ENCODE measurements at regions of chr21 and their contacts with region 1.

Region 1: DNA sequence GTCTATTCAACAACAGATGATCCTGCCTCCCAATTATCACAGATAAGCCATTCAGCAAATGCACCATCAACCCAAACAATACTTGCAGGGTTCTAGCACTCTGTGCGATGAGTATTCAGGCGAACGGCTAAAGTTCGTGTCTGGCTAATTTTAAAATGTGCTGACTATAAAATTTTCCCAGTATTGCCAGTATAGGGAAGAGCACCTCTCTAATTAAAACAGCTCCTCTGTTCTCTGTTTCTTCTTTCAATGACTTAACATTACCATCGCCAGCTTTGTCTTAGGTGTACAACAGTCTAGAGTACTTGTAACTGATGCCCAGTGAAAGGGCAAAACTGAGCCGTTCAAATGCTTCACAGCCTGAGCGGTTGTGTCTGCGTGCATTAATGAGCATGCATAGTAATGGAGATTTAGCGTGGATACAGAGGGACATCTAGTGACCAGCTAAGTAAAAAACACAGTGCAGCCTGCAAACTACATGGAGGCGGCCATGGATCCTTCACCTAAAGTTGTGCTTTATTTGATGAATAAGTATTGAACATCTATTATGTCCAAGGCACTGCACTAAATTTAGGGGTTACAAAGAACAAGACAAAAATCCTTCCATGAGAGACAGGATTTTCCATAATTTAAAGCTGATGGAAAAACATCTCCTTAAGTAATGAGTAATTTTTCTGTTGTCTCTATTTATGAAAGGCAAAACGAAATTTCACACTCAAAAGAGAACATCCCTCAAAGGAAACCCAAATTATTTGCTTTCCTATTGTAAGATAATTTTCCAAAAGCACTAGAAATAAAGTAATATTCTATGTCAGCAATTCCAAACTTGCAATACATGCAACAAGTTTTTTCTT is 120.0 kb downstream of the SETD4 start:
- DNase-seq: peak; percentile 57
- ATAC-seq: peak; percentile 66
- H3K4me3 ChIP-seq: no peak overlapping the region
- H3K4me3 Mint-ChIP-seq: no peak overlapping the region
- H3K27ac ChIP-seq: no peak overlapping the region
- H3K27ac Mint-ChIP-seq: no peak overlapping the region
- H3K4me1 ChIP-seq: peaks cover 9 to 12% of the 10 kb centered on the region in 2 donors
- H3K4me1 Mint-ChIP-seq: peaks cover 5% of the 10 kb centered on the region
- H3K27me3 ChIP-seq: peaks cover 0 to 5% (median 0%) of the 10 kb centered on the region in 4 experiments
- H3K27me3 Mint-ChIP-seq: peaks cover 5% of the 10 kb centered on the region
- CTCF ChIP-seq: peak; percentile 16

Region 2: DNA sequence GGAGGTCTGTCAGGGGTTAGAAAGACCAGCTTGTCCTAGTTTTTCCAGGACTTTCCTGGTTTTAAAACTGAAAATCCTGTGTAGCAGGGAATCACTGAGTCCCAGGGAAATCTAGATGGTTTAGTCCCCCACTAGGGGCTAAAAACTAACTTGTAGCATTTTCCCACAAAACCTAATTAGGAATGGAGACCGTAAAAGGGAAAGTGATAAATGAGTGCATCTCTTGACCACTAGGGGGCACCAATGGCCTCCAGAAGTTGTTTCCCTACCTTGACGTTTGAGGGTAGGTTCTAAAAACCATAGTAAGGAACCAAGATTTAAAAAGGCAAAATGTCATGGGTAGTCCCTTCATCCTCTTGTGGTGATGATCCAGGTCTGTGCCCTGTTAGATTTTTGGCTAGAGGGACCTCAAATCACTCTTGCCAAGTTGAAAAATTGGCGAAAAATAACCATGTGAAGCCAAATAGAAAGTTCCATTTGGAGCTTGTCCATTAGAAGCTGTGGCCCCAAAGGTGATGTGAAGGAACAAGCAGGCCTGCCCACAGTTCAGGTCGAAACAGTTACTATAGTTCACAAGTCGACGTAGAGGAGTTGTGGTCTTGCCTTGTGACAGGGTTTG is 1247.0 kb before region 1 on chr21:
- CTCF ChIA-PET with region 1: no interaction called
- POLR2A ChIA-PET with region 1: no interaction called
- intact Hi-C with region 1: loop called (anchors 1 kb)
- DNase-seq: peak; percentile 70
- ATAC-seq: peak; percentile 43
- H3K4me3 ChIP-seq: no peak overlapping the region
- H3K4me3 Mint-ChIP-seq: no peak overlapping the region
- H3K27ac ChIP-seq: no peak overlapping the region
- H3K27ac Mint-ChIP-seq: no peak overlapping the region
- H3K4me1 ChIP-seq: no peaks in the 10 kb centered on the region
- H3K4me1 Mint-ChIP-seq: no peaks in the 10 kb centered on the region
- H3K27me3 ChIP-seq: peaks cover 0 to 9% (median 1%) of the 10 kb centered on the region in 4 experiments
- H3K27me3 Mint-ChIP-seq: peaks cover 20% of the 10 kb centered on the region
- CTCF ChIP-seq: peak; percentile 96

Region 3: DNA sequence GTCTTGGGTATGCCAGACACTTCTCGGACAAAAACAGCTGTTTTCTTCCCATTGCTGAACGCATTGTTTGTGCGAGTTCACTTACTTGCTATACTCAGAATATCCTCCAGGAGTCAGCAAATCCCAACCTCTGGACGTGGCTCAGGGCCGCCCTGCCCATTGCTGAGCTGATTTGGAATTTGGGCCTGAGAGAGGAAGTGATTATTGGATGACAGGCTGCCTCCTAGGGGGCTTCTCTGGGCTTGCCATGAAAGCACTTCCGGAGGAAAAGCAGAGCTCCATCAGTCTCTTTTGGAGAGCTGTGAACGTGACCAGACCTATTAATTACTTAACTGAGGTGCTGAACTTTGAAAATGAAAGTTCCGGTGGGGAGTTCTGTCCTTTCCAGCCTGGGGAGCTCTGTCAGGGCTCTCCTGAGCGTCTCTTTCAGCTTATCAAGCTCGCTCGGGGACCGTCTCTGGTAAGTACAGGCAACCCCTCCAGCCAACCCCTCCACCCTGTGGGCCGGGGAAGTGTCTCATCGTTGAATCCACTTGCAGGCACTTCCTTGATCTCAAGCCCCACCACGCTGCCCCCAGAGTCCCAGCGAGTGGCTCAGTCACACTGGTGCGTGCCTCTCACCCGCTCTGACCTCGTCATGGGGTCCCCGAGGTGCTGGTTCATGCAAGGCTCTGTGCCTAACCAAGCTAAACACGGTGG is 1194.6 kb before region 1 on chr21:
- CTCF ChIA-PET with region 1: interaction called, 6 read pairs
- POLR2A ChIA-PET with region 1: no interaction called
- intact Hi-C with region 1: loop called (anchors 1 kb)
- DNase-seq: peak; percentile 76
- ATAC-seq: peak; percentile 89
- H3K4me3 ChIP-seq: peak overlapping the region in 3 of 5 experiments; percentile 14 to 41 (median 27)
- H3K4me3 Mint-ChIP-seq: peak overlapping the region; percentile 81
- H3K27ac ChIP-seq: no peak overlapping the region
- H3K27ac Mint-ChIP-seq: no peak overlapping the region
- H3K4me1 ChIP-seq: peaks cover 0 to 8% of the 10 kb centered on the region in 2 donors
- H3K4me1 Mint-ChIP-seq: peaks cover 4% of the 10 kb centered on the region
- H3K27me3 ChIP-seq: no peaks in the 10 kb centered on the region
- H3K27me3 Mint-ChIP-seq: peaks cover 25% of the 10 kb centered on the region
- CTCF ChIP-seq: peak; percentile 85

Region 4: GRCh38 chr21:34801519-34802132 is 1138.7 kb before region 1 on chr21:
- CTCF ChIA-PET with region 1: no interaction called
- POLR2A ChIA-PET with region 1: no interaction called
- intact Hi-C with region 1: loop called (anchors 2 kb)
- DNase-seq: peak; percentile 55
- ATAC-seq: peak; percentile 70
- H3K4me3 ChIP-seq: no peak overlapping the region
- H3K4me3 Mint-ChIP-seq: no peak overlapping the region
- H3K27ac ChIP-seq: peak overlapping the region in 1 of 2 donors; percentile 25
- H3K27ac Mint-ChIP-seq: no peak overlapping the region
- H3K4me1 ChIP-seq: no peaks in the 10 kb centered on the region
- H3K4me1 Mint-ChIP-seq: peaks cover 20% of the 10 kb centered on the region
- H3K27me3 ChIP-seq: no peaks in the 10 kb centered on the region
- H3K27me3 Mint-ChIP-seq: no peaks in the 10 kb centered on the region
- CTCF ChIP-seq: peak; percentile 68